ENCODE measurements at regions of chr11 and their contacts with region 1.

Region 1: DNA sequence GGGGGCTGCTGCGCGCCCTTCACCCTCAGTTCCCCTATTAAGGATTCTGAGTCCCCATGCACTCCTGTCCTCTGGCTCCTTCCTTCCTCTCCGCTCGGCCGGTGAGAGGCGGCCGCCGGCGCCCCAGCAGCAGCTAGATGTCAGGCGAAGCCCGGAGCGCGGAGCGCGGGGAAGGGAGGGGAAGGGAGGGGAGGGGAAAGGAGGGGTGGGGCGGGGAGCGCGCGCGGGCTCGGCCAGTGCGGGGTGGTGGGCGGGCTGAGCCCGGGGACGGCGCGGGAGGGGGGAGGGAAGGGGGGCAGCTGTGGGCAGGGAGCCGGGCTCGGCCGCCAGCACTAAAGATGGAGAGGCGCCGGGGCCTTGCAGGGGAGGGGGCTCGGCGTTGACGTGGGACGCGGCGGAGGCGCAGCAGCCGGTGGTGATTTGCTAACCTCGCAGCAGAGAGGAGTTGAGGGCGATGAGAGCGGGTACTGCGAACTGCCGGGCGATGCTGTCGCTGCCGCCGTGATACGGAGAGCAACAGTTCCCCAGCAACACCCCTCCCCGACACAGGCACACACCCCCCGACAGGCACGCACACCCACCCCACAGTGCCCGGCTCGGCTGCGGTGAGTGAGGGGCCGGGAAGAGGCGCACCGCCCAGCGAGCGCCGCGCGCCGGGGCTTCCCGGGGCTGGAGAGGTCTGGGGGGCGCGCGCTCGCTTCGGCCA is at the start of gene ZBTB16:
- DNase-seq: peak; percentile 74 to 96 (median 88)

Region 2: GRCh38 chr11:114036156-114036811 is 23.1 kb before region 1 on chr11:
- intact Hi-C with region 1: loop called (anchors 2 kb)
- DNase-seq: peak; percentile 36 to 91 (median 77)

Region 3: GRCh38 chr11:114159802-114160632 is 100.6 kb after region 1 on chr11:
- intact Hi-C with region 1: loop called (anchors 1 kb)
- DNase-seq: peak; percentile 78 to 97 (median 89)

Region 4: GRCh38 chr11:114257621-114258558 is 198.5 kb after region 1 on chr11:
- intact Hi-C with region 1: loop called (anchors 5 kb)
- DNase-seq: peak in 32 of 42 donors; percentile 11 to 77 (median 48)

Region 5: DNA sequence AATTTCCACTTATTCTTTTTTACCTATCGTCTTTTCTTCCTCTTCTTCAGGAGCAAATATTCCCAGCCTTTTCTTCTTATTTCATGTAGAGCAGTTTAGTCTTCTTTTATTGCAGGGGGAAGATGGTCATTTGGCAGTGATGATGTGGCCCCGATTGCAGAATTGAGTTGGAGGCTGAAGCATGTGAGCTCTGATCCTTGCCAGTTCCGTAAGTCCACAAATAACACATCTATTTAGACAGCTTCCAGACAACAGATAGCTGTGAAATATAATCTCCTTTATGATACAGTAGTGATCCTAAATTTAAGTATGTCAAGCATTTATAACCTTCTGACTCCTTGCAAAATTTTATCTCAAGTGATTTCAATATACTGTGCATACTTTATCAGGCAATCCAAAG is 407.3 kb after region 1 on chr11:
- intact Hi-C with region 1: no loop called
- DNase-seq: no peak